Endothelial cell of umbilical vein (primary cell): ENCODE measurements at regions of chr1 and their contacts with region 1.

Region 1: DNA sequence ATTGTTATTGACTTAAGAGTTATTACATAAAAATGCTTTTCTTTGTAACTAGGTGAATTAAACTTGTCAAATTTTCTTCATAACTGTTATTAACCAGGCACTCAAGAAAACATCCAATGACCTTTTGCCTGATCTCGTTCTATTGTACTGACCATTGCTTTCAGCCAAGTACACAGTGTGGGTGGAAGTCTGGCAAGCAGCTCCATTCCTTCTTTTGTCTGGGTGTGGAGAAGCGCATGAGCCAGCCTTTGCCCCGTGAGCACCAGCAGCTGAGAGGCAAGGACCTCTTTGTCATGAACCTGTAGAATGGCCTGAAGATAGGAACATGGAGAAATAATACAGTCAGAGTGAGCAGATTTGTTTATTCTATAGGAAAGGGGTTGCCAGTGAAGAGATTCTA is 57.5 kb downstream of the IARS2 start:
- DNase-seq: peak; percentile 69
- H3K4me3 ChIP-seq: no peak overlapping the region
- H3K27ac ChIP-seq: no peak overlapping the region
- H3K4me1 ChIP-seq: no peaks in the 10 kb centered on the region
- H3K27me3 ChIP-seq: no peaks in the 10 kb centered on the region
- CTCF ChIP-seq: no peak
- POLR2A ChIP-seq: no peak

Region 2: GRCh38 chr1:219339466-219339865 is 812.0 kb before region 1 on chr1:
- CTCF ChIA-PET with region 1: no interaction called
- POLR2A ChIA-PET with region 1: no interaction called
- dilution Hi-C with region 1: no loop called
- intact Hi-C with region 1: loop called (anchors 5 kb)
- DNase-seq: no peak
- H3K4me3 ChIP-seq: no peak overlapping the region
- H3K27ac ChIP-seq: no peak overlapping the region
- H3K4me1 ChIP-seq: no peaks in the 10 kb centered on the region
- H3K27me3 ChIP-seq: no peaks in the 10 kb centered on the region
- CTCF ChIP-seq: no peak
- POLR2A ChIP-seq: no peak

Region 3: DNA sequence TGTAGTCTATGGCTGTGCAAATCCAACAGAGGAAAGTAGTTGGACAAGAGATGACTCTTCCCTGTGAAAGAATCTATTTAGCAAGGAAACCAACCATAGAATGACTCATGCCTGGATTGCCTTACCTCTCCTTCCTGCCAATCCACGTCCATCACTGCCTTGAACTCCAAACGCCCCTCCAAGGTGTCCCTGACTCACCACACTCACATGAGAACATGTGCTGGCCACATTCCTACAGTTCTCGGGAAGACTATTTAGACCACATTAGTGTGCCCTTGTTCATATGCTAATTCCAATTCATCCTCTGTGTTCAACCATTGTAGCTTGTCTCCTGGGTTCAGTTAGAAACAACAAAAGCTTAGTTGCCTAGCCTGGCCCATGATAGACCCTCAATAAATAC is 380.4 kb before region 1 on chr1:
- CTCF ChIA-PET with region 1: no interaction called
- POLR2A ChIA-PET with region 1: no interaction called
- dilution Hi-C with region 1: no loop called
- intact Hi-C with region 1: no loop called
- DNase-seq: no peak
- H3K4me3 ChIP-seq: no peak overlapping the region
- H3K27ac ChIP-seq: no peak overlapping the region
- H3K4me1 ChIP-seq: no peaks in the 10 kb centered on the region
- H3K27me3 ChIP-seq: no peaks in the 10 kb centered on the region
- CTCF ChIP-seq: no peak
- POLR2A ChIP-seq: no peak